ENCODE measurements at regions of chr15 and their contacts with region 1.

Region 1: GRCh38 chr15:70466895-70467529 is 296.3 kb downstream of the UACA start:
- DNase-seq: peak; percentile 51
- H3K4me3 ChIP-seq: no peak overlapping the region
- H3K27ac ChIP-seq: no peak overlapping the region
- H3K4me1 ChIP-seq: peaks cover 6% of the 10 kb centered on the region
- H3K27me3 ChIP-seq: peaks cover 20% of the 10 kb centered on the region
- CTCF ChIP-seq: peak; percentile 70 to 83

Region 2: DNA sequence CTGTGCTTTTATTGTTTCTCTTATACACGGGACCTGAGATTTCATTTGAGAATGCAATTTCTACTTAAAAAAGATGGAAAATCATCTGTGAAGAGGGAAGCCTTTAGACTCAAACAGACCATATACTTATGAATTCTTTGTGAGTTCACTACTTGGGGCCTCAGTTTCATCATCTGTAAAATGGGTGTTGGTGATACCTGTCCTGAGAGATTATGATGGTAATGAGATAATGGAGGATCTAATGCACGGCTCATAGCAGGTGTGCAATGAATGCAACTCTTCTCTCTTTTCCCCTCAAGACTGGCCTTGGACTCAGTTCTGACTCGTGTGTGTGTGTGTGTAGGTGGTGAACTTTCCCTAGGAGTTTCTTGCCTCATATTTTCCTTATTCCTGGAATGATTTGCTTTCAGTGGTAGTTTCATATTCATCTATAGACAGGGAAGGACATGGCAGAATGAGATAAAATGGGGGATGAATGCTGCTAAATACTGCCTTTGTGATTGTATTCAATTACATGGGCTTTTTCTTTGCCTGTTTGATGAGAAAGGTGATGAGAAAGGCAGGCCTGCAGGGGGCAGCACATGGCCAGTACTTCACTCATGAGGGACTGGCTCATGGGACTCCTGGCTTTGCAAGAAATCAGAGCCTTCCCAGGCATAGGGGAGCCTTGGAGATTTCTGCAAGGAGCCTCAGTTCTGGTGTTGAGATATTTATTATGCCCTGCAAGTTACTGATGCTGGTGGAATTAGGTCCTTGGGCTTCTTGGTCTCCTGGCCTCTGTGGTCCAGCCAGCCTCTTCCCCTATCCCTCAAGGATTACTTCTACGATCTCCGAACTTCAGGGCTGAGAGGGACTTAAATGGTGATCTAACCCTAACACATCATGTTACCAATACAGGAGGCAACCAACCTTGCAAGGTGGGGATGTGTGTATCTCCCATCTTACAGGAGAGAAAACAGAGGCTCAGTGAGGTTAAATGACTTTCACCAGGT is 943.7 kb before region 1 on chr15:
- CTCF ChIA-PET with region 1: interaction called, 3 read pairs
- dilution Hi-C with region 1: no loop called
- in situ Hi-C with region 1: no loop called
- intact Hi-C with region 1: loop called (anchors 5 kb)
- DNase-seq: peak; percentile 50
- H3K4me3 ChIP-seq: no peak overlapping the region
- H3K27ac ChIP-seq: no peak overlapping the region
- H3K4me1 ChIP-seq: no peaks in the 10 kb centered on the region
- H3K27me3 ChIP-seq: no peaks in the 10 kb centered on the region
- CTCF ChIP-seq: peak; percentile 79 to 80

Region 3: GRCh38 chr15:69576035-69576526 is 890.9 kb before region 1 on chr15:
- CTCF ChIA-PET with region 1: no interaction called
- dilution Hi-C with region 1: no loop called
- in situ Hi-C with region 1: no loop called
- intact Hi-C with region 1: loop called (anchors 1 kb)
- DNase-seq: peak; percentile 19
- H3K4me3 ChIP-seq: no peak overlapping the region
- H3K27ac ChIP-seq: no peak overlapping the region
- H3K4me1 ChIP-seq: no peaks in the 10 kb centered on the region
- H3K27me3 ChIP-seq: no peaks in the 10 kb centered on the region
- CTCF ChIP-seq: peak; percentile 64 to 92

Region 4: GRCh38 chr15:69729161-69729748 is 737.8 kb before region 1 on chr15:
- CTCF ChIA-PET with region 1: no interaction called
- dilution Hi-C with region 1: no loop called
- in situ Hi-C with region 1: no loop called
- intact Hi-C with region 1: loop called (anchors 5 kb)
- DNase-seq: no peak
- H3K4me3 ChIP-seq: no peak overlapping the region
- H3K27ac ChIP-seq: no peak overlapping the region
- H3K4me1 ChIP-seq: no peaks in the 10 kb centered on the region
- H3K27me3 ChIP-seq: peaks cover 2% of the 10 kb centered on the region
- CTCF ChIP-seq: peak; percentile 73

Region 5: DNA sequence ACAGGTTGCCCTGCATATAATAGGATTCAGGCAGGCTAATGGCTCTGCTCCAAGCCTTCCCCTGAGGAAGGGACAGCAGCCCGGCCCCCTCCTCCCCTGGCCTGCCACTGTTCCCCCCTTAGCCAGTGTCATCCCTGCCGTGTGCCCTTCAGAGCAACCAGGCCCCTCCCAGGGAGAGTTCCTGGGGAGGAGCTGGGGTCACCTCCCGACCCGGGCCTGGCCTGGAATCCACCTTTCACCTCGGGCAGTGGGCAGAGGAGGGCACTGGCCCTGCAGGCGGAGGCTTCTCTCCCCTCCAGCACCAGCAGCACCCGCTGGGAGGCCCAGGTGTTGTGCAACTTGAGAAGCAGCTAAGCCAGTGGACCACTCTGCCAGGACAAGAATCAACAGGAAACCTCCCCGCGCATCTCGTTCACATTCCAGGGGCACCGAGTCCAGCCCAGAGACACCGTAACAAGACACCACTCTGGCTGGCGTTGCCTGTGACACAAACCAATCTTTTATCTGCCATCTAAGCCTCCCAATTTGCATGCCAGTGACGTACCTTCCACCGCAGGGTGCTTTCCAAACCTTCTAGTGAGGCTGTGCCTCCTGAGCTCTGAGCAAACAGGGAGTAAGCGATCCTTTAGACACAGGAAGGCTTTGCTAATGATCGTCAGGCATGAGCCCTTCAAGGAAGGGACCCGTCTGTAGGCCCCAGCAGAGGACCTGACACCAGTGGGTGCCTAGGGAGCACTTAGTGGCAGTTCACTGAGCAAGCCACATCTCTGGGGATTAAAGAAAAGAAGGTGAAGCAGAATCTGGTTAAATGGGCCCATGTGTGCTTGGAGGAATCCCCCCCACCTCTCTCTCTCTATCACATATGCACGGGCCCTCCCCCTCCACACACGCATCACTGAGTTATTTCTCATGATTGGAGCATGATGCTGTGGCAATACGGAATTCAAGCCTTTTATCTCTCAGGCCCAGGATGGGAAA is 270.4 kb before region 1 on chr15:
- CTCF ChIA-PET with region 1: interaction called, 3 read pairs
- dilution Hi-C with region 1: no loop called
- in situ Hi-C with region 1: no loop called
- intact Hi-C with region 1: loop called (anchors 10 kb)
- DNase-seq: peak; percentile 100
- H3K4me3 ChIP-seq: no peak overlapping the region
- H3K27ac ChIP-seq: peak overlapping the region; percentile 90
- H3K4me1 ChIP-seq: peaks cover 33% of the 10 kb centered on the region
- H3K27me3 ChIP-seq: no peaks in the 10 kb centered on the region
- CTCF ChIP-seq: peak in 1 of 2 donors; percentile 26

Region 6: DNA sequence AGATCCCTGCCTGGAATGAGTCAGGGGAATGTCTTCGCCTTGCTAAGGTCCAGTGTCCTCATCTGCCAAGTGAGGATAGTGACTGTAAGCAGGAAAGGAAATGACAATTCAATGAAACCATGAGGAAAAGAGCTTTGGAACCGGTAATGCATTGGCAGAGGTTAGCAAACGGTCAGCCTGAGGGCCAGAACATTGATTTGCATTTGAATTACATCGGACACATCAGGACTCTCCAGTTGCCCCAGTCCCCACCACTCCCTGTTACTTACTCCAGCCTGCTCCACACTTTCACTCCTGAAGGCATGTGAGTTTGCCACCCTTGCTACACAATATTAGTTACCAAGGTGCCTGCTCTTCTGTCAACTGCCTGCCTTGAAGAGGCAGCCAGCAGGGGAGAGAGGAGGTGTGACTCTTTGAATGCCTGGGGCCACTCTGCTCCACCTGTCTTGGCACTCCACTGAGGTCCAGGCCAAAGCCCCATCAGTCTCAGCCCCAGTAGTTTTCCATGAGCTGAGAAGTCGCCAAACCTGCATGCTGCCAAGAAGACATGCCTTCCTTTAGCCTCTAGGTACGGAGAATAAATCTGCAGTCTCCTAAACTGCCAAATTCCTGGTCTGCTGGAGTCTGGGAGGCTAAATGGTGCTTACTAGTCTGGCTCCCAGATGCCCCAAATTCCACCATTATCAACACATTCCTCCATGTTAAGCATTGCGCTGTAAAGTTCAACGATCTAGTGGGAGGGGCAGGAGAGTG is 177.6 kb before region 1 on chr15:
- CTCF ChIA-PET with region 1: no interaction called
- dilution Hi-C with region 1: no loop called
- in situ Hi-C with region 1: no loop called
- intact Hi-C with region 1: loop called (anchors 5 kb)
- DNase-seq: no peak
- H3K4me3 ChIP-seq: no peak overlapping the region
- H3K27ac ChIP-seq: no peak overlapping the region
- H3K4me1 ChIP-seq: no peaks in the 10 kb centered on the region
- H3K27me3 ChIP-seq: no peaks in the 10 kb centered on the region
- CTCF ChIP-seq: no peak

Region 7: GRCh38 chr15:70355275-70355795 is 111.7 kb before region 1 on chr15:
- CTCF ChIA-PET with region 1: no interaction called
- dilution Hi-C with region 1: no loop called
- in situ Hi-C with region 1: no loop called
- intact Hi-C with region 1: no loop called
- DNase-seq: no peak
- H3K4me3 ChIP-seq: no peak overlapping the region
- H3K27ac ChIP-seq: no peak overlapping the region
- H3K4me1 ChIP-seq: no peaks in the 10 kb centered on the region
- H3K27me3 ChIP-seq: no peaks in the 10 kb centered on the region
- CTCF ChIP-seq: peak; percentile 0 to 15

Region 8: DNA sequence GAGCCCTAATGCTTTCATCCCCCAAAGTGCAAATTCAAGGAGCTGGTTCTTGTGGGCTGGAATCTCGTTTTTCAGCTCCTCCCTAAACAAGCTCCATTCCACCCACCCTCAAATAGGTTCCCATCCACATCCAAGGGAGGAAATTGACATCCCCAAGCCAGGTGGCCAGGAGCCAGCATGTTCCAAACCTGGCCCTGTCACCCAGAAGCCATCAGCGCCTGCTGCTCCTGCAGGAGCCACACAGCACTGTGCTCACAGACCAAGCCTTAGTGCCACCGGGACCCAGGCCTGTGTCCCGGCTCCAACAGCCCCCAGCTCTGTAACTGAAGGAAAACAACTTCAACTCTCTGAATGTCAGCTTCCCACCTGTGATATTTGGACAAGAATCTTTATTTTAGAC is 32.8 kb after region 1 on chr15:
- CTCF ChIA-PET with region 1: no interaction called
- dilution Hi-C with region 1: no loop called
- in situ Hi-C with region 1: no loop called
- intact Hi-C with region 1: no loop called
- DNase-seq: no peak
- H3K4me3 ChIP-seq: no peak overlapping the region
- H3K27ac ChIP-seq: no peak overlapping the region
- H3K4me1 ChIP-seq: peaks cover 26% of the 10 kb centered on the region
- H3K27me3 ChIP-seq: peaks cover 9% of the 10 kb centered on the region
- CTCF ChIP-seq: no peak

Region 9: DNA sequence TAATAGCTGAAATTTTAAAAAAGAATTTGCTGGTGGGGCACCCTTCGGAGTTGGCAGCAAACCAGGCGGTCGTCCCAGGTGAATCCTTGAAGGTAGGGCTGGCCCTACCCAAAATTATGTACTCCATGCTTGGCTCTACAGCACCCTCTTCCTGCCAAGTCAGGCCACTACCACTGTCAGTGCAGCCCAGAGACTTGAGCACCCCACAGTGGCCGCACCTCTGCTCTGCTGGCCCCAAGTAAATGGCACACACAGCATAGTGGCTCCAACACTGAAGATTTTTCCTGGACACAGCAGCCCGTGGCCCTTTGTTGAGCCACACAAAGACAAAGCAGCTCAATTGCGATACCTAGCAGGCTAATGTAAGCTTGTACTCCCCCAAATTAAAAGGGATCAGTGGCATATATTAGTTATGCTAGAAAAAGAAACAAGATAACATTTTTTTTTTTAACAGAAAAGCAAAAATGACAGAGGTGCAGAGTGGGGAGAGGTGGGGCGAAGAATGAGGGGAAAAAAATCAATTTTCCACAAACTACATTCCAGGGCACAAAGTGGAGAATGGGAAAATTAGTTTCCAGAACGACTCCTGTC is 45.9 kb after region 1 on chr15:
- CTCF ChIA-PET with region 1: no interaction called
- dilution Hi-C with region 1: no loop called
- in situ Hi-C with region 1: no loop called
- intact Hi-C with region 1: loop called (anchors 2 kb)
- DNase-seq: peak; percentile 59
- H3K4me3 ChIP-seq: no peak overlapping the region
- H3K27ac ChIP-seq: no peak overlapping the region
- H3K4me1 ChIP-seq: peaks cover 18% of the 10 kb centered on the region
- H3K27me3 ChIP-seq: peaks cover 9% of the 10 kb centered on the region
- CTCF ChIP-seq: peak; percentile 94 to 96